Colonic mucosa (tissue), 4 donors: ENCODE measurements at regions of chr5 and their contacts with region 1.

Region 1: DNA sequence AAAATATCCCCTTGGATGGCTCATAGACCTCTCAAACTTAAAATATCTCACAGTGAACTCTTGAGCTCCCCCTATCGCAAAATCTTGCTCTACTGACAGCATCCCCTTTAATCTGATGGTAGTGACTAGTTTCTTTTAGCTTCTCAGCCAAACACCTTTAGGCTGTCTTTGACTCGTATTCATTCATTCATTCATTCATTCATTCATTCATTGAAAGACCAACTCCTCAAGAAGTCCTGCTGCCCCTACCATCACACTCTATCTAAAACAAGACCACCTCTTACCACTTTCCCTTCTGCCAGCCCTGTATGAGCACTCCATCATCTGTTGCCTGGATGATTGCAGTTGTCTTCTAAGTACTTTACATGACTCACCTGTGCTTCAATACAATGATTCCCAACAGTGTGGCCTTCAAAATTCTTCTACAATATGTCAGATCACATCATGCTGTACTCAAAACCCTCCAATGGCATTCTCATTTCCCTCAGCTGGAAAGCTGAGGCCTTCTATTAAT is 46.8 kb downstream of the ITGA2 start:
- DNase-seq: no peak
- H3K4me3 ChIP-seq: no peak overlapping the region
- H3K27ac ChIP-seq: no peak overlapping the region
- H3K4me1 ChIP-seq: no peaks in the 10 kb centered on the region
- H3K27me3 ChIP-seq: no peaks in the 10 kb centered on the region
- CTCF ChIP-seq: peak; percentile 20

Region 2: GRCh38 chr5:52989781-52990527 is 46.0 kb before region 1 on chr5:
- intact Hi-C with region 1: loop called (anchors 5 kb)
- DNase-seq: peak; percentile 74
- H3K4me3 ChIP-seq: peak overlapping the region; percentile 70
- H3K27ac ChIP-seq: peak overlapping the region; percentile 62
- H3K4me1 ChIP-seq: no peaks in the 10 kb centered on the region
- H3K27me3 ChIP-seq: no peaks in the 10 kb centered on the region
- CTCF ChIP-seq: peak; percentile 16

Region 3: GRCh38 chr5:53323943-53324642 is 288.2 kb after region 1 on chr5:
- intact Hi-C with region 1: no loop called
- DNase-seq: no peak
- H3K4me3 ChIP-seq: no peak overlapping the region
- H3K27ac ChIP-seq: no peak overlapping the region
- H3K4me1 ChIP-seq: no peaks in the 10 kb centered on the region
- H3K27me3 ChIP-seq: no peaks in the 10 kb centered on the region
- CTCF ChIP-seq: no peak

Region 4: DNA sequence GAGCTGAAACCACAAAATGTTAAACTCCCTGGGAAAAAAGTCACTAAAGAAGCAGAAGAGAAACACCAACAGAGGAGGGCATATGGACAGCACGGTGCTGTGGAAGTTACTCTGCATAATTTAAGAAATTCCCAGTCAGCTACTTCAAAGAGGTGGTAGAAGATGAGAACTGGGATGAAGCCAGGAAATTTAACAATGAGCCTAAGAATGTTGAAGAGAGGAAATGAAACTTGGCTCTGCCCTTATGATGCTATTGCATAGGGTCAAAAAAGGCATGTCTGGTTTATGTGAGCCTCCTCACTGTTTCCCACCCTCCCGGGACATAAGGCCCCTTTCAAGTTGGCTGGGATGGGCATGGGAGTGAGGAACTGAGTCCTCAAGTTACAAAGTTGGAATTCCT is 1456.3 kb after region 1 on chr5:
- intact Hi-C with region 1: no loop called
- DNase-seq: no peak
- H3K4me3 ChIP-seq: no peak overlapping the region
- H3K27ac ChIP-seq: no peak overlapping the region
- H3K4me1 ChIP-seq: no peaks in the 10 kb centered on the region
- H3K27me3 ChIP-seq: no peaks in the 10 kb centered on the region
- CTCF ChIP-seq: no peak